Mammary epithelial cell (primary cell): ENCODE measurements at regions of chr17 and their contacts with region 1.

Region 1: GRCh38 chr17:29931231-29931932 is 1.4 kb upstream of the SSH2 start:
- DNase-seq: peak; percentile 62
- H3K4me3 ChIP-seq: peak overlapping the region in 2 of 3 experiments; percentile 62 to 82
- H3K27ac ChIP-seq: peak overlapping the region; percentile 64
- H3K4me1 ChIP-seq: peaks cover 17% of the 10 kb centered on the region
- H3K27me3 ChIP-seq: no peaks in the 10 kb centered on the region
- CTCF ChIP-seq: peak; percentile 89 to 92

Region 2: DNA sequence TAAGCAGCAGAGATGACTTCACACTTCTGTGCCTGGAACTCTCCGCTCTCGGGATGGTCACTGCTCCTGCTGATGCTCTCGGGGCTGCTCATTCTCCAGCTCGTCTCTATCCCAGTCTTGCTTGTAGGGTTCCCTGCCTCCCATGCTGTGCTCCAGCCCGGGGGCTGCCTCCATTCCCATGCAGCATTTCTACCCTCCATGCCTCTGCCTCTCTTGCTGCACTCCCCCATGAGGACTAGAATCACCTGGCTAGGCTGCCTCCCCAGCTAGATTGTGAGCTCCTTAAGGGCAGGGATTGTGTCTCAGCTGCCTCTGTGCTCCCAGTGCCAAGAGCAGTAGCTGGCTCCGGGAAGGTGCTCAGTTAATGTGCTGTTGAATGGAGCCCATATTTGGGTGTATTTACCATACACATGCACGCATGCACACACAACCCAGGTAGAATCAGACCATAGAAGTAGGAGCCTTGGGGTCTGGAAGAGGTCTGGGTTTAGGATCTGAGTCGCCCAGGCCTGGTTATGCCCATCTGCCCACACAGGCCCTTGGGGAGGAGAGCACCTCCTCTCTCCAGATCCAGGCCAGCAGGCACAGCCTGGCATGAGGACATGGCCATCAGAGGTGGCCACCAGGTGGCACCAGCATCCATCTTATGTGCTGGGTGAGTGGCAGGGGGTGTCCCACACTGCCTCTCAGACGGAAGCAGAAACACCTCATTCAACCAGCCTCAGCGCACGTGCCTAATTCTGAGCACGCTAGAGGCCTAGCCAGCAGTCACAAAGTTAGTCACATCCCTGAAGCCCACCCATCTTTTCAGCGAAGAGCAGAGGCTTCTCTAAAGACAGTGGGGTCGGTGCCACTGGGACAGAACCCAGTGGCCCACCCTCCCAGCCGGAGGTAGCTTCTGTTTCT is 351.3 kb before region 1 on chr17:
- CTCF ChIA-PET with region 1: no interaction called
- dilution Hi-C with region 1: no loop called
- in situ Hi-C with region 1: no loop called
- intact Hi-C with region 1: loop called (anchors 2 kb)
- DNase-seq: peak; percentile 73
- H3K4me3 ChIP-seq: no peak overlapping the region
- H3K27ac ChIP-seq: no peak overlapping the region
- H3K4me1 ChIP-seq: peaks cover 50% of the 10 kb centered on the region
- H3K27me3 ChIP-seq: no peaks in the 10 kb centered on the region
- CTCF ChIP-seq: peak; percentile 80 to 97

Region 3: DNA sequence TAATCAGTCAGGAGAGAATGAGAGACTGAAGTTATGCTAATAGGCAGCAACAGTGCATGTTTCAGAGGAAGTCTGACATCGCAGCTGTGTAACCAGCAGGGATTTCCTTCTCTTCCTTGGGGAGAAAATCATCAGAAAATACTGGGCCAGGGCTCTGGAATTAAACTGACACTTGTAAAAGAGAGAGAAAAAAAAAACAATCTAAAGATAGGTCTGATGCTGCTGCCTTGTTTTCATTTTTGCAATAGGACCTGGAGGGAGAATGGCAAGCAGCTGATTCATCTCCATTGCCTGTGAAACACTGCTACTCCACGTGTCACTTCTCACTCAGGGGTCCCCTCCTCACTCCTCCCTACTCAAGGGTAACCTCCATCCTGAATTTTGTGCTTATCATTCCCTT is 291.0 kb before region 1 on chr17:
- CTCF ChIA-PET with region 1: interaction called, 24 read pairs
- dilution Hi-C with region 1: no loop called
- in situ Hi-C with region 1: loop called in 1 of 2 experiments (anchors 25 kb)
- intact Hi-C with region 1: loop called (anchors 1 kb)
- DNase-seq: no peak
- H3K4me3 ChIP-seq: no peak overlapping the region
- H3K27ac ChIP-seq: peak overlapping the region; percentile 53
- H3K4me1 ChIP-seq: peaks cover 20% of the 10 kb centered on the region
- H3K27me3 ChIP-seq: no peaks in the 10 kb centered on the region
- CTCF ChIP-seq: no peak

Region 4: DNA sequence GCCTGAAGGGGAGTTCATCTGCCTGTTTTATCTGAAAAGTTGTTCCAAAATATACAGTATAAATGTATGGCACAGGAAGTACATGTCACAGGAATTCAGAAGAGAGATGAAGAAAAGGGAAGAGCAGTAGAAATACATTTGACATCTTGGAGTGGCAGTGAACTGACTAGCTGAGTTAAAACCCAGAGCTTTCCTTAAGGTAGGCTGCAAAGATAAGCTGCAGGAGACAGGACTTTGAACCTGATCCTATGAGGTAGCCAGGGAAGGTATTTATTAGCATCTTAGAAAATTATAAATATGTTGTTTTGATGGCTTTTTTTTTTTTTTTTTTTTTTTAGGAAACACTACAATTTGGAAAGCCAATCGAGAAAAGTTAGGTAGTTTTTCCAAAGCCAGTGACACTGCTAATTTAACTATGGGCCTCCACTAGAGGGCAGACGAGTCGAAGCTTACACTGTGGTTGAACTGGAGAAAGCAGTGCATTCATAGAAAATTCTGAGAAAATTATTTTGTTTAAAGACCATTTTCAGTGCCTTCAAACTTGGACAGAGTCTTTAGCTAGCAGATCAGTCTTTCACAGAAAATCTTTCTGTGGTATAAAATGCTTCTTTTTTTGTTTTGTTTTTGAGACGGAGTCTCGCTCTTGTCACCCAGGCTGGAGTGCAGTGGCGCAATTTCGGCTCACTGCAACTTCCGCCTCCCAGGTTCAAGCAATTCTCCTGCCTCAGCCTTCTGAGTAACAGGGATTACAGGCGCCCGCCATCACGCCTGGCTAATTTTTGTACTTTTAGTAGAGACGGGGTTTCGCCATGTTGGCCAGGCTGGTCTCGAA is 123.6 kb before region 1 on chr17:
- CTCF ChIA-PET with region 1: interaction called, 3 read pairs
- dilution Hi-C with region 1: no loop called
- in situ Hi-C with region 1: loop called (anchors 5 kb)
- intact Hi-C with region 1: loop called (anchors 1 kb)
- DNase-seq: peak; percentile 34
- H3K4me3 ChIP-seq: no peak overlapping the region
- H3K27ac ChIP-seq: no peak overlapping the region
- H3K4me1 ChIP-seq: peaks cover 11% of the 10 kb centered on the region
- H3K27me3 ChIP-seq: no peaks in the 10 kb centered on the region
- CTCF ChIP-seq: peak; percentile 76 to 83

Region 5: DNA sequence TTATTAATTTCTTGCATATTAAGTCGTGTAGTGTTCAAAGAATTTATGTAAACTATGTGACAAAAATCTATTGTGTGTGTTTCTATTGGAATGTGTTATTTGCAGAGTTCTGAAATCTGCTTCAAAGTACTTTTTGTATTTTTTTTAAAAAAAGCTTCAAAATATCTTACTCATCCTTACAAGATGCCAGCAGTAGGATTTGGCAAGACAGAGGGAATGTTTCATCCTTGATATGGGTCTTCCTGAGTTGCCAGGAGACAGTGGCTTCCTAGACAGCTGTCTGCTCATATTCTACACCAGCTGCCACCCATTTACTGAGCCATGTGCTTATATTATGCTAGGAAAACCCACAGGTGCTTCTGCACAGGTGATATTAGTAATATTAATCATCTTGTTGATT is 46.5 kb after region 1 on chr17:
- CTCF ChIA-PET with region 1: no interaction called
- dilution Hi-C with region 1: loop called (anchors 5 kb)
- in situ Hi-C with region 1: no loop called
- intact Hi-C with region 1: no loop called
- DNase-seq: peak; percentile 47
- H3K4me3 ChIP-seq: no peak overlapping the region
- H3K27ac ChIP-seq: no peak overlapping the region
- H3K4me1 ChIP-seq: no peaks in the 10 kb centered on the region
- H3K27me3 ChIP-seq: peaks cover 2% of the 10 kb centered on the region
- CTCF ChIP-seq: no peak

Region 6: DNA sequence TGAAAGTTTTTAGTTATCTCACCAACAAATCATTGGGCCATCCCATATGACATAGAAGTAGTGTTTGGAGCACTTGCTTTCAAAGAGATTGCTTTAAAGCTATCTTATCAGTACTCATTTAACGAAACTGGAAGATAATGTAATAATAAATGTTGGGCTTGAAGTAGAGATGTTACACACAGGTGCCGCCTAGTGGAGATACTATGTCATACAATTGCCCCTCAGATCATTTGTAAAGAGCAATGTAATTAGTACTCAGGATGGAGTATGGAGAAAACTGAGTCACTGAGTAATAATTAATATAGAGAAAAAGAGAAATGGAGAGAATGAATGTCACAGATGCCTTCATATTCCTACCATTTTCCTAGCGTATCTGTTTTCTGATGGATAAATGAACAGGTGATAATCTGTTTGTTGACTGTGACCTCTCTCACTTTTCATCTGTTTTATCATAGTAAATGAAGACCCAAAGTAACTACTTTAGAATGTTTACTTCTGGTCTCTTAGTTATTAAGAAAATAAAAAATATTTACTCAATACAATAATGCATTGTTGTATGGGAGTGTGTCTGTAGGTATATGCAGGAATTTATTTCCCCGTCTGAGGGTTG is 90.4 kb after region 1 on chr17:
- CTCF ChIA-PET with region 1: interaction called, 6 read pairs
- dilution Hi-C with region 1: no loop called
- in situ Hi-C with region 1: loop called in 1 of 2 experiments (anchors 10 kb)
- intact Hi-C with region 1: loop called (anchors 1 kb)
- DNase-seq: peak; percentile 35
- H3K4me3 ChIP-seq: no peak overlapping the region
- H3K27ac ChIP-seq: no peak overlapping the region
- H3K4me1 ChIP-seq: no peaks in the 10 kb centered on the region
- H3K27me3 ChIP-seq: no peaks in the 10 kb centered on the region
- CTCF ChIP-seq: peak; percentile 80 to 90